Mucosa of descending colon (tissue), 3 donors: ENCODE measurements at regions of chr12 and their contacts with region 1.

Region 1: DNA sequence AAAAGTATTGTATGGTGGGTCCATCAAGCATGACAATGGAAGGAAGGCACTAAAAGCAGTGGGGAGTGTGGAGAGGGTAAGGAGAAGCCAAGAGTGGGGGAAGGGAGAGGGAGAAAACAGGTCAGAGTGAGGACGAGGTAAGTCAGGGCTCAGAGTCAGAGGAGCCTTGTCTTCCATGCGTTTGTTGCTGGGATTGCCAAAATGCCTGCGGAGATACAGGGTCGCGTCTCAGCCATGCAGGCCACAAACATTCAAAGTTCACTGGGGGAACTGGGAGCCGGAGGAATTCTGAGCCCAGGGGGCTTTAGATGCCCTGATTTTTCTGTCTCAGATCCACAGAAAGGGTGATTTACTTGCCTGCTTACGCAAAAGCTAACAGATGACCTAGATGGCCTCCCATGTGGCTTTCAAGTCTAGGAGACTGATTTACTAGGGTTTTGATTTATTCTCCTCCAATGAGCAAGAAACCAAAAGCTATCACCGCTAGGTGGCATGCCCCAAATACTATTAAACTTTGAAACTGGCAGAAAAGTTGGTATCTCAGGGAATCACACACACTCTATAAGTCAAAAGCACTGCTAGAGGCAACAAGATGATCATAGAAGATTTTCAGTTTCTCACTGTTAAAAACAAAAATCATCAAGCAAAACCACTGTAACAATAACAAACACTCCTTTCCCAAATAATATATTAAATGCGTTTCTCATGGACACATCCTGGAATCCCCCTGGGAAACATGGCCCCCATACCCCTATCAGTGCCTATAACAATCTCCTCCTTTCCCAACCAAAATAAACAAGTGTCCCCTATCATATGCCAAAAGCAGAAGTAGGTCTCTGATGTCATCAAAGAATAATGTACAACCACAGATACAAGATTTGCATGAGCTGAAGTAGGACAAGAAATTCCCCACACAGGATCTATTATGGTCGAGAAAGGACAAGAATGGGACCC is 26.6 kb upstream of the MDM1 start:
- DNase-seq: peak in 1 of 3 donors; percentile 92
- ATAC-seq: peak; percentile 91
- H3K4me3 ChIP-seq: no peak overlapping the region
- H3K4me1 ChIP-seq: no peaks in the 10 kb centered on the region
- CTCF ChIP-seq: peak; percentile 28

Region 2: GRCh38 chr12:68686595-68687521 is 328.0 kb after region 1 on chr12 and contains the start of gene NUP107:
- intact Hi-C with region 1: loop called in 1 of 2 experiments (anchors 10 kb)
- DNase-seq: peak; percentile 99 to 100 (median 99)
- ATAC-seq: peak; percentile 99
- H3K4me3 ChIP-seq: peak within 1 kb of the TSS; percentile 70
- H3K4me1 ChIP-seq: peaks cover 8% of the 10 kb centered on the region
- CTCF ChIP-seq: peak; percentile 15
- total RNA-seq, gene NUP107: 27.7 to 39.6 (median 32.3) TPM